ENCODE measurements at regions of chr7 and their contacts with region 1.

Region 1: DNA sequence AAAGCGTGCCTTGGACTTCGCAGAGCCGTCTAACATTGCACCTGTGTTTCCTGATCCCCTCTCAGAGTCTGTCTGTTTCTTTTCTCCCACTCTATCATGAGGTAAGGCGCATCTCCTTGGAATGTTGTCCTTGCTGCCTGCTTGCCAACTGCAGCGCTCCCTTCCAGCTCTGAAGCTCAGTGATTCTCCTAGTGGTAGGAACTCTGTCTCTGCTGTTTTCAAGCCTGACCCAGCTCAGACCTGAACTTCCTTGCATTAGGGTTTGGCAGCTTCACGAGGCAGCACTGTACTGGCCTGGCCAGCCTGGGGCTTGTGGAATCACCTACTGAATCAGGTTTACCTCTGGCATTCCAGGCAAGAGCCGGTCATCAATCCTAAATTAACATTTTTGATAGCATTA is 123.9 kb downstream of the CREB5 start:
- DNase-seq: no peak
- ATAC-seq: peak; percentile 30

Region 2: DNA sequence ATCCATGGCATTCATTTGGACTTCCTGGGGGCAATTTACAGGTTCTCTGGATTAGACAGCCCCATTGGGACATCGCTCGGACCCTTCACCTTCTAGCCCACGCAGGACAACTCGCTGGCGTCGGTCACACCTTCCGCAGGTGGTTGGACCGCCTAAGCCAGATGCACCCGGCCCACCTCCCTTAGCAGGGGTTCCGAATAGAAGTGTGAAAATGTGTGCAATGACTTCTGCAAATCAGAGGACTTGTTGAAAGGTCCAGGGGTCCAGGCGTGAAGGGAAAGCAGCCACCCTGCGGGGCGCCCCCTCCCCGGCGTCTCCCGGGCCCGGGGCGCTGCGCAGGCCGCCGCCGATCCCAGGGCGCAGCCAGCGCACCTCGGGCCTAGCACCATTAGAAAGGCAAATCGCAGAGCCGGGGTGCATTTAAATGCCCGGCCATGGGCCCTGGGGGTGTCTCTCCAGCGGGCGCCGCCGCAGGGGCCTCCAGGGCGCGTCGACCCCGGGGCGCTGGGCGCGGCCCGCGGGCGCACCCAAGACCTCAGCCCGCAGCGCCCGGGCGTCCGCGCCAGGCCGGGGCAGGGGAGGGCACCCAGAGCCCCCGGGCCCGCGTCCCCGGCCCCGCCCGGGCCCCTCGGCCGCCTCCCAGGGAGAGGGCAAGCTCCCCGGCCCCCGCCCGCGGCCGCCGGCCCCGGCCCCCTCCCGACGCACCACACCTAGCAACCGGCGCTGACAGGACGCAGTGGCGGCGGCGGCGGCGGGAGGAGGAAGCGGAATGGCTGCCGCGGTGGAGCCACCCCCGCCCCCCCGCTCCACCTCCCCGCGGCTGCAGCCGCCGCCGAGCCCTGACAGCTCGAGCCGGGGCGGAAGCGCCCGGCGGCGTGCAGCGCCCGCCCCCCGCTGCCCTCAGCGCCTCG is 356.9 kb before region 1 on chr7:
- intact Hi-C with region 1: no loop called
- DNase-seq: peak; percentile 88
- ATAC-seq: peak; percentile 71

Region 3: GRCh38 chr7:28328180-28328579 is 208.1 kb before region 1 on chr7:
- intact Hi-C with region 1: no loop called
- DNase-seq: no peak
- ATAC-seq: no peak

Region 4: DNA sequence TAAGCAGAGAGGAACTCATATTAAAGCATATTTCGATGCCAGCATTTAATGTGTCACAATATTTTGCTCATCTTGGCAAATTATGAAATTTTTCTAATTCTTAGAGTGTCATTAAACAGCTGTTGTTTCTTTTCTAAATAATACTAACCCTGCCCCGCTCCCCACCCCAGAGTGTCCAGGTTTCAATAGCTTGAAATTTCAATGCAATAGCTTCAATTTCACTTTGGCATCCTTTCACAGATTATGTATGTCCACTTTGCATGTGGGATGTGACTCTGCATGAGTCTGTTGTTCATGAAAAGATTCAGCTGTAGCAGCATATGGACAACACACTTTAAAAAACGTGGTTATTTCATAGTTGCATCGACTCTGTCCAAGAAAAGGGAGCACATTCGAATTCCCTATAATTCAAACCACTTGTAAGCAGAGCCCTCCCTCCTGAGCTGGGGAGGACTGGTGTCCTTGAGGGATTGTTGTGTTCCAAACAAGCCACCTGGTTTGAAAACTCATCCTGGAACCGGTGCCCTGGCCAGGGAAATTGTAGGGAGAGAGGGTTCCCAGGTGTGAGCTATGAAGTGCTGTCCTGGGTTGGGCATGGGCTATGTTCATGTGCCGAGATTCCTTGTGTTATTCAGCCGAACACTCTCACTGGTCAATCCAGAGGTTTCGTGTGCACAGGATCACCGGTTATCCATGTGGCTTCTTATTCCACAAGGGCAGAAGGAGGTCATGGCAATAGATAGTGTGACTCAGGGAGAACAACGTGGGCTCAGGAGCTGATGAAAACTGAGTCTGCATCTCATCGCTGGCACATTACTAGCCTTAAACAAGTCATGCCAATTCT is 188.6 kb before region 1 on chr7:
- intact Hi-C with region 1: no loop called
- DNase-seq: no peak
- ATAC-seq: peak; percentile 80

Region 5: GRCh38 chr7:28408960-28409715 is 127.1 kb before region 1 on chr7:
- intact Hi-C with region 1: loop called (anchors 10 kb)
- DNase-seq: peak; percentile 95
- ATAC-seq: peak; percentile 87

Region 6: GRCh38 chr7:28458732-28459131 is 77.5 kb before region 1 on chr7:
- intact Hi-C with region 1: no loop called
- DNase-seq: peak; percentile 45
- ATAC-seq: peak; percentile 64

Region 7: GRCh38 chr7:28608731-28609130 is 72.5 kb after region 1 on chr7:
- intact Hi-C with region 1: loop called (anchors 10 kb)
- DNase-seq: no peak
- ATAC-seq: no peak